Common myeloid progenitor, CD34-positive (primary cell): ENCODE measurements at regions of chr17 and their contacts with region 1.

Region 1: DNA sequence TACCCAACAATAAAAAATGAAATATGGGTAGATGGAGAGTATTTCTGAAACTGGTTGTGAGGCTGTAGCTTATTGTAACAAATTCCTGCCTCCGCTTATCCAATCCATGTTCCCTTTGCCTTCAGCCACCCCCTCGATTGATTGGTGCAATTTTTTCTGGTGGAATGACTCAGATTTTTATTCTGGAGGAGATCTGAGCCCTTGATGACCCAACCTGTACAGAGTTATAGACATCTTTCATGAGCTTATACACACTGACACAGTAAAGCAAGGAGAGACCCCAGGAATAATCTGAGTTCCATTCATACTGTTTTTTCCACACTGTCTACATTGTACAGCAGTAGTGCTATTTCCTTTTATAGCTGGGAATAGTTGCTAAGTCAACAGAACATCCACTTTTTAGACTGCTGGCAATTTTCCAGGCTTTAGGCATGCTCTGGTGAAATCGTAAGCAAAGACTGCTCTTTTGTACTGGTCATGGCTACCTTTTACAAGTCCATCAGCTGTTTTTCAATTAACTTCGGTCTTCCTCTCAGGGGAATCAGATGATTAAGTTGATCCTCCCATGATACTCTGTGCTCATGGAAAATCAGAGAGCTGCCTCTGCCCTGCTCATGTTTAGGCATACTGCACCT is 30.1 kb downstream of the CCL4 start:
- DNase-seq: no peak
- H3K4me3 ChIP-seq: no peak overlapping the region
- H3K27ac ChIP-seq: no peak overlapping the region
- H3K4me1 ChIP-seq: peaks cover 0 to 11% (median 4%) of the 10 kb centered on the region in 4 experiments
- H3K27me3 ChIP-seq: peaks cover 0 to 2% (median 0%) of the 10 kb centered on the region in 5 experiments

Region 2: GRCh38 chr17:36117505-36118382 is 16.0 kb before region 1 on chr17:
- CTCF ChIA-PET with region 1: interaction called, 13 read pairs
- POLR2A ChIA-PET with region 1: interaction called, 3 read pairs
- DNase-seq: no peak
- H3K4me3 ChIP-seq: no peak overlapping the region
- H3K27ac ChIP-seq: no peak overlapping the region
- H3K4me1 ChIP-seq: no peaks in the 10 kb centered on the region
- H3K27me3 ChIP-seq: no peaks in the 10 kb centered on the region

Region 3: DNA sequence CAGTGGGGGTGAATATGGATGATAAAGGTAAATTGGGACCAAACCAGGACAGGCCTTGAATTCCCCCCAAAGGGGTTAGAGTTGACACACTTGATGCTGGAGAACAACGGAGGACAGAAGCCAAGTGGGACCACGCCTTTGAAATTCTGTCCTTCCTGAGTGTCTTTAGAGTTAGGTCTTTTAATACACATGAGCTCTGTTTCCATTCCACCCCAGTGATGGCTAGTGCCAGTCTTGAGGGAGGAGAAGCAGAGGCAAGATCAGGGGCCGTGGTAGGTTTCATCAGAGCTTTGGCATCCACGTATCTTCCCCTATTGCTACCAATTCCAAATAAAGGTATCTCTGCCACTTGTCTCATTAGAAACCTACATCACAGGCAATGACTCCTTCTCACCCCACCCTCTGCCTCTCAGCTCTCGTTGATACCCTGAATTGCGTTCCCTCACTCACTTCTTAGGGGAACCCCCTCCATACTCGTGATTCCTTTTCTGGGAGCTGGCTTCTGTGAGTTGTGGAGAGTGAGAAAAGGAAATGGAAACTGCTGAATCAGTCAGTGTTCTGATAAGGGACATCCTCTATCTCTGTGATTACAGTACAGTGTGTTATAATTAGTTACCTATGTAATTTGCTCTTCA is 65.2 kb after region 1 on chr17:
- CTCF ChIA-PET with region 1: no interaction called
- POLR2A ChIA-PET with region 1: no interaction called
- DNase-seq: peak in 2 of 3 donors; percentile 72 to 83
- H3K4me3 ChIP-seq: peak overlapping the region in 1 of 7 experiments; percentile 55
- H3K27ac ChIP-seq: no peak overlapping the region
- H3K4me1 ChIP-seq: peaks cover 26 to 76% (median 63%) of the 10 kb centered on the region in 4 experiments
- H3K27me3 ChIP-seq: no peaks in the 10 kb centered on the region